Ascending aorta (tissue), 2 donors: ENCODE measurements at regions of chr10 and their contacts with region 1.

Region 1: DNA sequence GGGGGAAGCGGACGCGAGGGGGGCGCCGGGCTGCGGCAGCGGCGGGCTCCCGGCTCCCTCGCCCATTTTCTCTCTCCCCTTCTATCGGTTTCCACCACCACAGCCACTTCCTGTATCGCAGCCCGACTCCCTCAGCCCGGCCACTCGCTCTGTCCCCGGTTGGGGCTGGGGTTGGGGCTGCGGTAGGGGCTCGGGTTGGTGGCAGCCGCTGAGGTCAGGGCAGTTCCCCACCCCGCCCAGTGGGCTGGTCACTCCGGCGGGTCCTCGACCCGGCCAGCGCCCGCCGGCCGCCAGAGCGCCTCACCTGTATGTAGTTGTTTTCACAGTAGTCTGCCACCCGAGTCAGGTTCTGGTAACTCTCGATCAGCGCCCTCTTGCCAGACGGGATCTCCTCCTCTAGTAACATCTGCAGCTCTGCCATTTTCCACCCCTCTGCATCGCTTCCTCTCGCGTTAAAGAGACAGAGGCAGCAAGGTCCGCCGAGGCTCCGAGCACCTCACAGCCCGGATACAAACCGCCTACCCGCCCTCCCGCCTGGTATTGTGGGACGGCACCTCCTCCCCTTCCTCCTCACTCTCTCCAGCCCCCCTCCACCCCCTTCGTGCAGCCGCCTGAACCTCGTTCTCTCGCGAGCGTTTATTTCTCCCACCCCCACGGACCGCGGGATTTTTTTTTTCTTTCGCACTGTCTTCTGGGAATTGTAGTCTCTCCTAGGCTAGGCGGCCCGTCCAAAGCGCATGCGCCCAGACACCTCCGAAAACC is at the start of gene ABI1:
- DNase-seq: peak; percentile 91 to 98
- H3K4me3 ChIP-seq: peak within 1 kb of the TSS; percentile 90 to 99
- H3K27ac ChIP-seq: peak within 1 kb of the TSS; percentile 97 to 99
- H3K4me1 ChIP-seq: peaks cover 4 to 25% of the 10 kb centered on the region in 2 donors
- H3K27me3 ChIP-seq: no peaks in the 10 kb centered on the region
- CTCF ChIP-seq: no peak
- total RNA-seq, gene ABI1: 5.7 TPM

Region 2: DNA sequence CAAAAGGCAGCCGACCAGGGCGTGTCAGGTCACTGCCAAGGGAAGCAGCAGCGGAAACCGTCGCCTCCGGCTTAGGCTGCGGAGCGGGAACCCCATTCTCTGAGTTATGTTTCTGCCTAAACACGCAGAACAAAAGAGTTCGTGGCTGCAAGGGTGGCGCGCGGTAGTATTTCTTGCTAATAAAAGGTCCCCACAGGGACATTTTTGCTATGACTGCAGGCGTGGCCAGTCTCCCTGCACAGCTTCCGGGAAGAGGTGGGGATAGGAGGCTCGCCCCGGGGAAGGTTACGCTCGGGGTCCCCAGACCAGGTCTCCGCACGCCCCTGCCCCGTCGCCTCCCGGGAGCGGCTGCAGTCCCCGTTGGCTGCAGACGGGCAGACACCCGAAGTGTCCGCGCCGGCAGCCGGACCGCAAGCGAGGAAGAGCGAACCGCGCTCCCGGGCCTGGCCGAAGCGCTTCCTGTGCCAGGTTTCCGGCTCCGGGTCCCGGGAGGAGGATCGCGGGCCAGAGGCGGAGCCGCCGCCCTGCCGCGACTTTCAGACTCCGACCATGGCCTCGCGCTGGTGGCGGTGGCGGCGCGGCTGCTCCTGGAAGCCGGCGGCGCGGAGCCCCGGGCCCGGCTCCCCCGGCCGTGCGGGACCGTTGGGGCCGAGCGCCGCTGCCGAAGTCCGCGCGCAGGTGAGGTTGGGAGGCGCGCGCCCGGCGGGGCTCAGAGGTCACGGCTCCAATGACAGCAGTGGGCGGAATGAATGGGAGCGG is 163.3 kb before region 1 on chr10 and contains the start of gene PDSS1:
- intact Hi-C with region 1: loop called (anchors 5 kb)
- DNase-seq: peak in 1 of 2 donors; percentile 85
- H3K4me3 ChIP-seq: peak within 1 kb of the TSS; percentile 93 to 99
- H3K27ac ChIP-seq: peak within 1 kb of the TSS; percentile 78 to 79
- H3K4me1 ChIP-seq: peaks cover 4 to 9% of the 10 kb centered on the region in 2 donors
- H3K27me3 ChIP-seq: no peaks in the 10 kb centered on the region
- CTCF ChIP-seq: no peak
- total RNA-seq, gene PDSS1: not detected

Region 3: DNA sequence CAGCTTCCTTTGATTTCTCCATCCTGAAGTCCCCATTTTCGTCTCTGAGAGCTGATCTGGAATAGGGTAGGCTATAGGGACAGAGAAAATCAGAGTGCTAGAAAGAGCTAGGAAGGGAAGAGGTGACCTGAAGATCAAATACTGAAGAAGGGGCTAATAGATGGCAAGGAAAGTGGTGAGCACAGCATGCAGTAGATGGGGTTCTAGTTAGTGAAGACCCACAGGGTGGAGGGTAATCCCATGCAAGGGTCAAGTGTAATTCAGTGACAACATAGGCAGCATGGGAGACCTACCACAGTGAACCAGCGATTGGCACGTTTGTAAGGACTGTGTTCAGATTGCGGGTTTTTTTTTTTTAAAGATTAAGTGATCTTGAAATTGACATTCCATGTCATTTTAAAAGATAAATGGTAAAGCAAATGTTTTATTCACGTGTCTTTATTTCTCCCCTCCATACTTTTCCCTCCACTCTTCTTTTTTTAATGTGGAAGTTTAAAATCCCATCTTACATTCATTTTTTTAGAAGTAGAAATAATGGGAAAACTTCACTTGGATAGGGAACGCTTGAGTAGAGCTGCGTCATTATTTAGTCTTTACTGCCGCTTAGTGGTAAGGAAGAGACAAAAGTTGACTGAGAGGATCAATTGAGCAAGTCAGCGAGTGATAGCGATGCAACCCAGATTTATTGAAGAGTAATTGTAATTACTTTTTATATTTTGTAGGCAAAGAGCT is 21.1 kb after region 1 on chr10:
- intact Hi-C with region 1: loop called (anchors 1 kb)
- DNase-seq: no peak
- H3K4me3 ChIP-seq: no peak overlapping the region
- H3K27ac ChIP-seq: no peak overlapping the region
- H3K4me1 ChIP-seq: peaks cover 0 to 4% of the 10 kb centered on the region in 2 donors
- H3K27me3 ChIP-seq: no peaks in the 10 kb centered on the region
- CTCF ChIP-seq: peak; percentile 41 to 62 (median 61)

Region 4: GRCh38 chr10:27099916-27100812 is 239.5 kb after region 1 on chr10 and contains the start of gene ANKRD26:
- intact Hi-C with region 1: loop called (anchors 2 kb)
- DNase-seq: peak; percentile 90 to 99
- H3K4me3 ChIP-seq: peak within 1 kb of the TSS; percentile 66 to 74
- H3K27ac ChIP-seq: peak within 1 kb of the TSS; percentile 84 to 85
- H3K4me1 ChIP-seq: peaks cover 0 to 6% of the 10 kb centered on the region in 2 donors
- H3K27me3 ChIP-seq: no peaks in the 10 kb centered on the region
- CTCF ChIP-seq: no peak
- total RNA-seq, gene ANKRD26: 2.4 TPM

Region 5: GRCh38 chr10:27155066-27155754 is 294.6 kb after region 1 on chr10 and contains the start of gene MASTL:
- intact Hi-C with region 1: loop called (anchors 2 kb)
- DNase-seq: peak; percentile 79 to 98
- H3K4me3 ChIP-seq: peak within 1 kb of the TSS; percentile 78 to 90
- H3K27ac ChIP-seq: peak within 1 kb of the TSS; percentile 98 to 100
- H3K4me1 ChIP-seq: peaks cover 3 to 18% of the 10 kb centered on the region in 2 donors
- H3K27me3 ChIP-seq: no peaks in the 10 kb centered on the region
- CTCF ChIP-seq: no peak
- total RNA-seq, gene MASTL: 11.8 TPM

Region 6: DNA sequence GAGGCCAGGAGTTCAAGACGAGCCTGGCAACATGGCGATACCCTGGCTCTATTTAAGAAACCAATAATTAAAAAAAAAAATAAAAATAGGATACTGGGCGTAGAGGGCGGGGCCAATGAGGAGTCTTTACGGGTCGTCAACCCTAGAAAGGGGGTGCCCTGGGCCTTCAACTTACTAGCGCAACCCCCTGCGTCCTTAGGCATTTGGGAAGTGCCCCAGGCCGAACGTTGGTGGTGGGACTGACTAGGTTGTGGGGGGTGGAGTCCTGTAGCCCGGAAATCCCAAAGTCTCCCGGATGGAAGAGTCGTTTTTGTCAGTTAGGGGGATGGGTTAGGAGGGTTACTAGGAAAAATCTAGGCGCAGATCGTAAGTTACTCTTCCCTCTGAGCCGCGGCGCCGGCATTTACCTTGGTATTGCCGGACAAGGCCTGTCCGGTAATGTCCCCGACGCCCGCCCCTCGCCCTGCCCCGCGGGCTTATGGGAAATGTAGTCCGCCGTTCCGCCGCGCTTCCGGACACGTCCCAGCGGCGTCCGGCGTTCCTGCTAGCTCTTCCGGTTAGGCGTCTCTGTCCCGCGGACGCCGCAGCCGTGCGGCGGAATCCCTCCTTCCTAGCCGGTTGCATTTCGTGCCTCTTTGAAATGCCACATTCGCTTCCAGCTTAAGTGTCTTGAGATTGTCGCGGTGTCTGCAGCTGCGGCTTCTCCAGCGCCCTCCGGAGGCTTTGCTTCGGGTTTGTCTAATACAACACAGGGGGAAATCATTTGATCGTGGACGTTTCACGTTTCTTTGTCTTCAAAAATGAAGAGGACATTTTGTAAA is 381.2 kb after region 1 on chr10:
- intact Hi-C with region 1: loop called (anchors 5 kb)
- DNase-seq: peak; percentile 48 to 94
- H3K4me3 ChIP-seq: peak overlapping the region; percentile 79 to 86
- H3K27ac ChIP-seq: peak overlapping the region; percentile 96 to 98
- H3K4me1 ChIP-seq: peaks cover 0 to 18% of the 10 kb centered on the region in 2 donors
- H3K27me3 ChIP-seq: no peaks in the 10 kb centered on the region
- CTCF ChIP-seq: peak; percentile 26 to 50 (median 38)